ENCODE measurements at regions of chr5 and their contacts with region 1.

Region 1: GRCh38 chr5:72268753-72269410 is 51.2 kb downstream of the MRPS27 start:
- DNase-seq: peak; percentile 63
- ATAC-seq: no peak
- H3K4me3 Mint-ChIP-seq: no peak overlapping the region
- H3K27ac Mint-ChIP-seq: no peak overlapping the region
- H3K4me1 Mint-ChIP-seq: peaks cover 2% of the 10 kb centered on the region
- H3K27me3 Mint-ChIP-seq: no peaks in the 10 kb centered on the region

Region 2: GRCh38 chr5:72209515-72210115 is 59.3 kb before region 1 on chr5:
- CTCF ChIA-PET with region 1: no interaction called
- POLR2A ChIA-PET with region 1: no interaction called
- intact Hi-C with region 1: loop called in 1 of 2 experiments (anchors 10 kb)
- DNase-seq: no peak
- ATAC-seq: no peak
- H3K4me3 Mint-ChIP-seq: no peak overlapping the region
- H3K27ac Mint-ChIP-seq: no peak overlapping the region
- H3K4me1 Mint-ChIP-seq: peaks cover 24% of the 10 kb centered on the region
- H3K27me3 Mint-ChIP-seq: no peaks in the 10 kb centered on the region